Left ventricle myocardium superior (tissue), 1 donor: ENCODE measurements at regions of chr6 and their contacts with region 1.

Region 1: DNA sequence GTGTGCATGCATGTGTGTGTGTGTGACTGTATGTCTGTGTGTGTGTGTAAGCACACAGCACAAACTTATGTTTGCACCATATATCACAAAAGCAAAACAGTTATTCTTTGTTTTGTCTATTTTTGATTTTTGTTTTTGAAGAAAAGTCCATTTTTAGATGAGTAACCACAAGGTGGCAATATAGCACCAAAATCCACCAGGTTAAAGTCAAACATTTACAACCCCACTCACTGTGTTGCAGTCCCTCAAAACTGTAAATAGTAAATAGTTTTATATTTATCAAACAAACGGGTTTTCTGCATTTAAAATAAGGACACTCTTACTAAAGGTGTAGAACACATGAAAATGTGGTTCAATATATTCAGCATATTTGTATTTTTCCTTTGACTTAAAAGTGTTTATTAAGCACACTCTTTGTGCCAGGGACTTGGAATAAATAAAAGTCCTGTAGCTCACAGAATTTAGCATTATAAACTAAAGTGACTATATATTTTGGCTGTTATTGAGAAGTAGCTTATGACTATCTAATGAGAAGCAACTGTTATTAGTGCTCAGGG is 118.5 kb downstream of the GFRAL start:
- DNase-seq: no peak
- ATAC-seq: no peak

Region 2: GRCh38 chr6:55953335-55953734 is 507.6 kb after region 1 on chr6:
- intact Hi-C with region 1: loop called (anchors 10 kb)
- DNase-seq: no peak
- ATAC-seq: peak; percentile 73